Activated CD8-positive, alpha-beta T cell treated with anti-CD3 and anti-CD28 coated beads for 36 hours (primary cell): ENCODE measurements at regions of chr20 and their contacts with region 1.

Region 1: DNA sequence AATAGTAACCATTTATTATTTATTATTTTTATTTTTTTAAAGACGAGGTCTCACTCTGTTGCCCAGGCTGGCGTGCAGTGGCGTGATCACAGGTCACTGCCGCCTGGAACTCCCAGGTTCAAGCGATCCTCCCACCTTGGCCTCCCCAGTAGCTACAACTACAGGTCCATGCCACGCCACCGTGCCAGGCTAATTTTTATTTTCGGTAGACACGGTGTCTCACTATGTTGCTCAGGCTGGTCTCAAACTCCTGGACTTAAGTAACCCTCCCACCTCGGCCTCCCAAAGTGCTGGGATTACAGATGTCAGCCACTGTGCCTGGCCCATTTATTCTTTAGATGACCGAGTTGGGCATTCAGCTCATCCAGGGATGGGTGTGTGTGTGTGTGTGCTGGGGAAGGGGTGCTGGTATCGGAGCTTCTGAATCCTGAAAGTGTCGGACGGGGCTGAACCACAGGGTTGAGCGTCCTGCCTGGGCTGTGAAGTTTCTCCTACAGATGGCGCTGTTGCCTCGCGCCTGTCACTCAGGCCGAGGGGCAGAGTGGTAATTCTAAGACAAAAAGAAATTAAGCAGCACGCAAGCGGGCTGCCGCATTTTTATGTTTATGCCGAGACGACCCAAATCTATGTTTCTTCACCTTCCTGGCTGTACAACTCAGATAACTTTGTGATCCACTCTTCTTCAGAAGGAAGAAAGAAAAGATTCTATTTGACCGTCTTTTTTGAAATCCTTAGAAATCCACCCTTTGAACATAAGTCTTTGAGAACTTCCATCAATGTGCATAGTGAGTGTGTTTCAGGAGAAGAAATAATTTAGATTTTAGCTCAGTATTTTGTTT is 252.8 kb downstream of the CDH26 start:
- DNase-seq: peak; percentile 72
- ATAC-seq: peak; percentile 67
- H3K4me3 Mint-ChIP-seq: no peak overlapping the region
- H3K27ac Mint-ChIP-seq: no peak overlapping the region
- H3K4me1 Mint-ChIP-seq: no peaks in the 10 kb centered on the region
- H3K27me3 Mint-ChIP-seq: peaks cover 2% of the 10 kb centered on the region
- CTCF ChIP-seq: peak; percentile 81

Region 2: GRCh38 chr20:60228255-60228654 is 17.3 kb after region 1 on chr20:
- CTCF ChIA-PET with region 1: interaction called, 15 read pairs
- POLR2A ChIA-PET with region 1: no interaction called
- intact Hi-C with region 1: no loop called
- DNase-seq: no peak
- ATAC-seq: no peak
- H3K4me3 Mint-ChIP-seq: no peak overlapping the region
- H3K27ac Mint-ChIP-seq: no peak overlapping the region
- H3K4me1 Mint-ChIP-seq: no peaks in the 10 kb centered on the region
- H3K27me3 Mint-ChIP-seq: peaks cover 3% of the 10 kb centered on the region
- CTCF ChIP-seq: no peak

Region 3: DNA sequence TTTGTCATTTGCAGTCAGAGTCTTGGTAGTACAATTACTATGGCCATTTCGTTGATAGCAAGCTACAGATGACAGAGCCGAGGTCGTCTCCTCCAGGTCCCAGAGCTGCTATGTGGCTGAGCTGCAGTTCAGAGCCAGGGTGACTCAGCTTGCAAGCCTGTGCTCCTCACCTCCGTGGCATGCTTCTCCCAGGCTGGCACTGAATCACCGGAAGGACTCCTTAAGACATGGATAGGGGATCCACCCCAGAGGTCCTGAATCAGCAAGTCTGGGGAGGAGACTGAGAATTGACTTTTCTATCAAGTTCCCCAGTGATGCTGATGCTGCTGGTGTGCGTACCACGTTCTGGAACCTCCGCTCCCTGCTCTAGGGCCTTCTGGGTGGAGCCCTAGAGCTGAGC is 38.4 kb after region 1 on chr20:
- CTCF ChIA-PET with region 1: no interaction called
- POLR2A ChIA-PET with region 1: no interaction called
- intact Hi-C with region 1: no loop called
- DNase-seq: no peak
- ATAC-seq: no peak
- H3K4me3 Mint-ChIP-seq: no peak overlapping the region
- H3K27ac Mint-ChIP-seq: no peak overlapping the region
- H3K4me1 Mint-ChIP-seq: no peaks in the 10 kb centered on the region
- H3K27me3 Mint-ChIP-seq: no peaks in the 10 kb centered on the region
- CTCF ChIP-seq: no peak

Region 4: GRCh38 chr20:60262967-60263603 is 52.1 kb after region 1 on chr20:
- CTCF ChIA-PET with region 1: interaction called, 15 read pairs
- POLR2A ChIA-PET with region 1: no interaction called
- intact Hi-C with region 1: no loop called
- DNase-seq: peak; percentile 60
- ATAC-seq: peak; percentile 42
- H3K4me3 Mint-ChIP-seq: no peak overlapping the region
- H3K27ac Mint-ChIP-seq: no peak overlapping the region
- H3K4me1 Mint-ChIP-seq: peaks cover 13% of the 10 kb centered on the region
- H3K27me3 Mint-ChIP-seq: no peaks in the 10 kb centered on the region
- CTCF ChIP-seq: peak; percentile 75

Region 5: DNA sequence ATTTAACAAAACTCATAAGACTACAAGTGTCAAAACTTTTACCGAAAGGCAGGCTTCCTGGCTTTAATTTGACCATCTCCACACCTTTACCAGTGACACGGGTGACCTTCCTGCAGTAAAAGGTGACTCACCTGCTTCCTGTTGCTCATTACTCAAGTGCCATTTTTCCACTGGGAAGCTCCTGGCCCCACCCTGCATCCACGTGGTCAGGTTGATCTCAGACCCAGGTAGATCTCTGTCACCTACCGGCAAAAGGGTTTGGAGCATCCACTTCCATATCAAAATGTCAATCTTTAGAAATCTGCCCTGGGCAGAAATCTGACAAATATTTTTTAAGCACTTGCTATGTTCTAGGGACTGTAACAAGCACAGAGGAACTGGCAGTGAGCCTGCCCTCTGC is 1009.2 kb after region 1 on chr20:
- CTCF ChIA-PET with region 1: no interaction called
- POLR2A ChIA-PET with region 1: no interaction called
- intact Hi-C with region 1: loop called (anchors 10 kb)
- DNase-seq: no peak
- ATAC-seq: no peak
- H3K4me3 Mint-ChIP-seq: no peak overlapping the region
- H3K27ac Mint-ChIP-seq: no peak overlapping the region
- H3K4me1 Mint-ChIP-seq: no peaks in the 10 kb centered on the region
- H3K27me3 Mint-ChIP-seq: no peaks in the 10 kb centered on the region
- CTCF ChIP-seq: no peak